HAP-1 (cell line): ENCODE measurements at regions of chr6 and their contacts with region 1.

Region 1: DNA sequence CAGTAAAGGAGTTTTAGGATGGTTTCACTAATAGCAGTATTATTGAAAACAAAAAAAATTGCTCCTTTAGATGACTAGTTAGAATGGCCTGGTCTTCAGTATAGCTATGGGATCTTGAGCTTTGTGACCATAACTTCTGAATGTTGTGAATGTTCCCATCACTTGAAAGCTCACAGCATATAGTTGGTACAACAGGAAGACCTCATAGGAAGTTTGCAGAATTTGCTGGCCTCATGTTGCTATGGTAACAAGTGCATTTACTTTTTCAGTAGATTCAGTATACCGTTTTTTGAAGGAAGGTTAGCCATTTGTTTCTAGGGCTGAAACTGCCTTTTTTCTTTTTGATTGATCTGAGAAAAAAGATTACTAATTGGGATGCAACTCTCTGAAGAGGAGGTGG is 8.3 kb downstream of the PHF3 start:
- DNase-seq: no peak
- H3K4me3 ChIP-seq: no peak overlapping the region
- H3K4me1 ChIP-seq: peaks cover 9% of the 10 kb centered on the region
- H3K27me3 ChIP-seq: no peaks in the 10 kb centered on the region

Region 2: GRCh38 chr6:63598049-63599036 is 45.5 kb before region 1 on chr6:
- in situ Hi-C with region 1: loop called (anchors 10 kb)
- DNase-seq: peak; percentile 75 to 82
- H3K4me3 ChIP-seq: peak overlapping the region; percentile 31
- H3K4me1 ChIP-seq: peaks cover 7% of the 10 kb centered on the region
- H3K27me3 ChIP-seq: no peaks in the 10 kb centered on the region